Panc1 (cell line): ENCODE measurements at regions of chr17 and their contacts with region 1.

Region 1: GRCh38 chr17:82780971-82781893 is 29.4 kb downstream of the TBCD start:
- DNase-seq: no peak
- ATAC-seq: peak; percentile 68
- H3K4me3 ChIP-seq: no peak overlapping the region
- H3K27ac ChIP-seq: no peak overlapping the region
- H3K4me1 ChIP-seq: no peaks in the 10 kb centered on the region
- H3K27me3 ChIP-seq: no peaks in the 10 kb centered on the region
- CTCF ChIP-seq: no peak

Region 2: DNA sequence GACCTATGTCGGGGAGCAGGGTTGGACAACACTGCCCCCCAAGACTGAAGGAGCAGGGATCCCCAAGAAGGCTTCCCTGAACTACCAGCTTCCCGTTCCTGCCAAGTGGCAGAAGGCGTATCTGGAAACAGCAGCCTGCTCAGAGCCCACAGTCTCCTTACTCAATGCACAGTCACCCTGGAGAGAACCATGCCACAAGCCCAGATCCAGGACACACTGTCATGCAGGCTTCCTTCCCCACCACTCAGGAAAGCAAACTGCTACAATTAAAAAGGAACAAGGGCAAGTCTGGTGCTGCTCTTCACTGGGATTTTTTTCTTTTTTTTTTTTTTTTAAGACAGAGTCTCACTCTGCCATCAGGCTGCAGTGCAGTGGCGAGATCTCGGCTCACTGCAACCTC is 141.2 kb before region 1 on chr17:
- CTCF ChIA-PET with region 1: no interaction called
- POLR2A ChIA-PET with region 1: interaction called, 16 read pairs
- in situ Hi-C with region 1: no loop called
- intact Hi-C with region 1: no loop called
- DNase-seq: no peak
- ATAC-seq: no peak
- H3K4me3 ChIP-seq: no peak overlapping the region
- H3K27ac ChIP-seq: no peak overlapping the region
- H3K4me1 ChIP-seq: no peaks in the 10 kb centered on the region
- H3K27me3 ChIP-seq: no peaks in the 10 kb centered on the region
- CTCF ChIP-seq: no peak

Region 3: GRCh38 chr17:82808921-82809905 is 28.0 kb after region 1 on chr17:
- CTCF ChIA-PET with region 1: no interaction called
- POLR2A ChIA-PET with region 1: no interaction called
- in situ Hi-C with region 1: no loop called
- intact Hi-C with region 1: no loop called
- DNase-seq: no peak
- ATAC-seq: no peak; the same call in 1 of the 2 replicates
- H3K4me3 ChIP-seq: no peak overlapping the region
- H3K27ac ChIP-seq: no peak overlapping the region
- H3K4me1 ChIP-seq: no peaks in the 10 kb centered on the region
- H3K27me3 ChIP-seq: no peaks in the 10 kb centered on the region
- CTCF ChIP-seq: no peak